Thyroid gland (tissue), 4 donors: ENCODE measurements at regions of chr6 and their contacts with region 1.

Region 1: DNA sequence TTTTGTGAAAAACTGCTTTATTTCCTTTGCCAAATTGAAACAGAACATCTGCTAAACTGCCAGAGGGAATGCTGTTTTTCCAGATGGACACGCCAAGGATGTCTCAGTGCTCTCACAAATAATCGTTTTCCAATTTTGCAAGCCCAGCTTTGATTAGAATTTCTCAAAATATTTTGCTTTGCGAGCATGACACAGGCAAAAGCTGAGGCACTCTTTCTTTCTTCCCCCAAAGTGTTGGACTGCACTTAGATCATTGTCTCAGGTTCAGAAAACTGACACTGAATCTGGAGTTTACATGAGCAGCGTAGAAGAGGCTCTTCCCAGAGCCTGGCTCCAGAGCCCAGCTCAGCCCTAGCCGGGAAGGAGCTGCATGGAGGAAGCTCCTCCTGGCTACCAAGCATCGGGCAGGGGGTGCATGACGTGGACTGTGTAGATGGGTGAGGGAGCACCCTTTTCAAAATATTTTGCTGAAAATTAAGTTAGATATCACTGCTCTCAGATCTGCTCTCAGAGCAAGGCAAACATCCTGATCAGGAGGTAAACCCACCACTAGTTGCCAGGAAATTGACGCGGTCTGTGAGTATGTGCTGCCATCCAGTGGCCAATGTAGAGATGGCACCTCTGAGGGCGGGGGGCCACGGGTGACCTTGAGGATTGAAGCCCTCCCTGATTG is 107.5 kb downstream of the SLC22A3 start:
- DNase-seq: peak; percentile 40 to 53
- H3K4me3 ChIP-seq: no peak overlapping the region
- H3K27ac ChIP-seq: peak overlapping the region in 1 of 3 donors; percentile 17
- H3K4me1 ChIP-seq: peaks cover 0 to 4% of the 10 kb centered on the region in 2 donors
- H3K27me3 ChIP-seq: no peaks in the 10 kb centered on the region
- CTCF ChIP-seq: peak; percentile 86 to 98 (median 94)
- POLR2A ChIP-seq: no peak

Region 2: DNA sequence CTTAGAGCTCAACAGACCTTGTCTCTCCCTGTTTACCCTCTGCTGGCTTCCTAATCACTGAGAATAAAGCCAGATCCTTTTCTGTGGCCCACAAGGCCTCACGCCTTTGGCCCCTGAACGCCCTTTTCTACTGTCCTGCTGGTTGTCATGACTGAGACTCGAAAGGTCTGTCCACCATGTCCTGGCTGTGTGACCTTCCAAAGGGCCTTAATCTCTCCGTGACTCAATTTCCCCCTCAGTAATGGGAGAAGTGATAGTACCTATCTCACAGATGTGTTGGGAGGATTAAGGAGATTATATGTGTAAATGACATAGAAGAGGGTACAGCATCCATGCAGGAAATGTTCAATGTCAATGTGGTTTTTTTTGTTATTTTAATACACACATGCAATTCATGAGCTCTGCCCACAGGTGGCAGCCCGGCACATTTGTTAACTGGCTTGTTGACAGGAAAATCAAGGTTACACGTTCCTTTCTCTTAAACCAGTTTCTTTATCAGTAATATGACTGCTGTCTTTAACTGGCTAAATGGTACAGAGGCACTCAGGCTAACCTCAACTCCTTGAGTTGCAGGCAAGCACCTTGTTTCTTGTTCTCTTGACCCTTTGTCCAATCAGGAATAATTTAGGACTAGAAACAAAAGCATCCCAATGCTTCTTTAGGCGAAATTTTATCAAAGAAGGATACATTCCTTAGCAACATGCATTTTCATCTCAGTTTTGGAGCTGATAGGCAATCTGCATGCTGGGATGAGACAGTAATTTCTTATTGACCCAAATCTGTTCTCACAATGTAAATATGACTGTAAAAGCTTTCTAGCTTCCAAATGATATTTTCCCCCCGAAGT is 317.5 kb before region 1 on chr6:
- intact Hi-C with region 1: loop called (anchors 5 kb)
- DNase-seq: peak; percentile 43 to 64
- H3K4me3 ChIP-seq: no peak overlapping the region
- H3K27ac ChIP-seq: no peak overlapping the region
- H3K4me1 ChIP-seq: peaks cover 0 to 4% of the 10 kb centered on the region in 2 donors
- H3K27me3 ChIP-seq: no peaks in the 10 kb centered on the region
- CTCF ChIP-seq: peak in 5 of 6 experiments; percentile 47 to 76 (median 72)
- POLR2A ChIP-seq: no peak

Region 3: DNA sequence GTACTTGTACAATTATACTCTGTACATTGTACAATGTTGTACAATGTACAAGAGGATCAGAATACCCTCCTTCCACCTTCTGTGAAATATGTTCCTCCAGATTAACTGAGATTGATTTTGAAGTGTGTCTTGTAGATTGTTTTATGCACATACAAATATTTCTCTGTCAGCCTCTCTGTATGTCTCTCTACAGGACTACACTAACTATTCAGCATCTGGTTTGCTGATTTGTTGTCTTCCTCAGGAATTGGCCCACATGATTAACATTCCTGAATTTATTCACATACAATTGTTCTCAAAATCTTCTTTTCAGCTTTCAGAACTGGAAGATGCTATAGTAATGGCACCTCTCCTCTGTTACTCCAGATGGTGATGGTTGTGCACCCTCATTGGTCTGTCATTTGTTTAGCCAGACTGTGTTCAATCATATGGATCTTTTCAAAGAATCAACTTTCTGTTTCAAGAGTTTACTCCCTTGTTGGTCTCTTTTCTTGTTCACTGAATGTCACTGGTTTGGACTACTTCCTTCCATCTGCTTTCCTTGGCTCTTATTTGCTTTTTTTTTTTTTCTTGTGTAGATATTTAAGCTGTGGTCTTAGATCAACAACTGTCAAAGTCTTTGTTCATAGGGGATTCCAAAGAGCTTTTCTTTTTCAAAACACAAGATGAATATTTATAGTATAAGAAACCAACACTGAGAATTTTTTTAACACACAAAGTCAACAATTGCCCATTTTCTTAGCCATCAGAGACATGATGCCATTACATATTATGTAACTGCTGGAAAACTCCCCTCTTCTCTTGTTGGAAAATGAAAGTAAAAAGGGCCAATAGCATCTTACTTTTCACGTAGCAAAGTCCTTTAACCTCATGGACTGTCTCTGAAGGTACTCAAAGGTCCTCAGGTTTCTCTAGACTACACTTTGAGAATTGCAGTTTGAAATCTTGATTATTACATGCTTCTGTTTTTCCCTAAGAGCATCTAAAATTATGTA is 140.5 kb after region 1 on chr6:
- intact Hi-C with region 1: no loop called
- DNase-seq: no peak
- H3K4me3 ChIP-seq: no peak overlapping the region
- H3K27ac ChIP-seq: no peak overlapping the region
- H3K4me1 ChIP-seq: no peaks in the 10 kb centered on the region
- H3K27me3 ChIP-seq: no peaks in the 10 kb centered on the region
- CTCF ChIP-seq: no peak
- POLR2A ChIP-seq: no peak